ENCODE measurements at regions of chr3 and their contacts with region 1.

Region 1: DNA sequence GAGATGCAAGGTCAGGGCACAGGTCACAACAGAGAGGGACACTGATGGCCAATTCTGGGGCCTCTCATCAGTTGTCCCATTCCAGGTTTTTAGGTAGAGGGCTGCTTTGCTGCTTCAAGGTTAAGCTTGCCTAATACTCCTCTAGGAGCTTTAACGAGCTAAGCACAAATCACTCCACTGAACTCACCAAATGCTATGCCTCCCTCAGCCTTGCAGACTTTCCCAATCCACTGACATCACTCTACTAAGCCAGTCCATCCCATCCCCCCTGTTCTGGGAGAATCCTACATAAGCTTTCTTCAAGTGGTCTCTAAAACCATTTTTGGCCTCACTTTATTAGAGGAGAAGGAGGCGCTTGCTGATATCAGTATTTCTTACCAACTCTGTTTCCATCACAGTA is 24.8 kb upstream of the PDCD6IP start:
- DNase-seq: no peak
- CTCF ChIP-seq: no peak

Region 2: DNA sequence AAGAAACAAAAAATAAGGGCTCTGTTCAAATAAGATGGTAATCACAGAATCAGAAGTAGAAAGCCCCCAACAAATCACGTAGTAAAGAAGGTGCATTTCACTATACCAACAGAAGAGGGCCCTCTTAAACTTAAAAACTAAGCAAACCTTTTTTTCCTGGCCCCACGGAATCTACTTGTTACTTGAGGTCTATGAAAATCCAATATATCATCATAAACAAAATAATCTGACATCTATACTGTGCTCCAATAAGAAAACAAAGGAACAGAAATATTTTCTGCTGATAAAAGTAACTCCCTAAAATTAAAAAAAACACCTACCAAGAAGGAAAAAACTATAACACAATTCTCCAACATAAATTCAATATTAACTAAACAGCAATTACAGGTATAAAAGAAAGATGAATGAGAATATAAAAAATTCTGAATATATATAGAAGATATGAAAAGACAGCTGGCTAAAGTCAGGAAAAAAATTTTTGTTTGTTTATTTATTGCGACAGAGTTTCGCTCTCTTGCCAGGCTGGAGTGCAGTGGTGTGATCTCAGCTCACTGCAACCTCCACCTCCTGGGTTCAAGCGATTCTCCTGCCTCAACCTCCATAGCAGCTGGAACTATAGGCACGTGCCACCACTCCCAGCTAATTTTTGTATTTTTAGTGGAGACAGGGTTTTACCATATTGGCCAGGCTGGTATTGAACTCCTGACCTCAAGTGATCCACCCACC is 137.3 kb before region 1 on chr3:
- CTCF ChIA-PET with region 1: interaction called, 13 read pairs
- POLR2A ChIA-PET with region 1: no interaction called
- DNase-seq: peak; percentile 37
- CTCF ChIP-seq: peak; percentile 39

Measured in GM10248 (cell line).